ENCODE measurements at regions of chr2 and their contacts with region 1.

Region 1: DNA sequence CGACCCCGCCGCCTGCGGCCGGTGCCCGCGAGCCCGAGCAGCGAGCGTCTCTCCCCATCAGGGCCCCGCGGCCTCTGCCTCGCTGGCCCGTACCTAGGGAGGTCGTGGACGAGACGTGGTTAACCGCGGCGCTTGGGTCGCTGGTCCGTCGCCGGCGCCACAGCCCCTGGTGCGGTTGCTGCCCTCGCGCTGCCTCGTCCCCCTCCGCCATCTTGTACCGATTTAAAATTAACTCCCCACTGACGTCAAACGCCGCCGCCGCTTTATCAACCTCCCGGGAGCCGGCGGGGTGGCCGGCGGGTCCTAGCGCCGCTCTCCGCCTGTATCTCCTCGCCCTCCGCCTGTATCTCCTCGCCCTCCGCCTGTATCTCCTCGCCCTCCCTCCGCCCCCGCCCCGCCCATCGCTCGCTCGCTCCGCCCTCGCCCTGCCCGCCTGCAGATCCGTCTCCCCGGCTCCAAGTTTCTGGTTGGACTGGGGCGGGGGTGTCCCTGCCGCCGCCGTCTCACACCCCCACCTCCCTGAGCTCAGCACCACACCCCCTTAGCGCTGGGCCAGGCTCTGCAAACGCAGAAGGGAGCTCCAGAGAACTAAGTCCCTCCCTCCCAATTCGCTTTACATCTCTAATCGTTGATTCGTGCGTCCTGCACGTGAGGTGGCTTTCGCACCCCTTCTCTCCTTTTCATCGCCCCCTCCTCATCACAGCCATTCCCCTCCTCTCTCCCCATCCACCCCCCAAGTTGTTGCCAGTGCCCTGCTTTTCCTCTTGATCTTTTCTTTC is at the start of gene ATL2:
- DNase-seq: peak; percentile 97
- ATAC-seq: peak; percentile 79
- H3K4me3 Mint-ChIP-seq: peak within 1 kb of the TSS; percentile 90
- H3K27ac Mint-ChIP-seq: peak within 1 kb of the TSS; percentile 90
- H3K4me1 Mint-ChIP-seq: peaks cover 73% of the 10 kb centered on the region
- H3K27me3 Mint-ChIP-seq: no peaks in the 10 kb centered on the region
- total RNA-seq, gene ATL2: 29.9 to 50.3 TPM

Region 2: GRCh38 chr2:36966370-36967235 is 1410.6 kb before region 1 on chr2 and contains the start of gene STRN:
- CTCF ChIA-PET with region 1: no interaction called
- POLR2A ChIA-PET with region 1: no interaction called
- intact Hi-C with region 1: loop called in 1 of 2 experiments (anchors 2 kb)
- DNase-seq: peak; percentile 99
- ATAC-seq: peak; percentile 95
- H3K4me3 Mint-ChIP-seq: peak within 1 kb of the TSS; percentile 100
- H3K27ac Mint-ChIP-seq: peak within 1 kb of the TSS; percentile 97
- H3K4me1 Mint-ChIP-seq: peaks cover 41% of the 10 kb centered on the region
- H3K27me3 Mint-ChIP-seq: no peaks in the 10 kb centered on the region
- total RNA-seq, gene STRN: 27.7 to 32.0 TPM

Region 3: DNA sequence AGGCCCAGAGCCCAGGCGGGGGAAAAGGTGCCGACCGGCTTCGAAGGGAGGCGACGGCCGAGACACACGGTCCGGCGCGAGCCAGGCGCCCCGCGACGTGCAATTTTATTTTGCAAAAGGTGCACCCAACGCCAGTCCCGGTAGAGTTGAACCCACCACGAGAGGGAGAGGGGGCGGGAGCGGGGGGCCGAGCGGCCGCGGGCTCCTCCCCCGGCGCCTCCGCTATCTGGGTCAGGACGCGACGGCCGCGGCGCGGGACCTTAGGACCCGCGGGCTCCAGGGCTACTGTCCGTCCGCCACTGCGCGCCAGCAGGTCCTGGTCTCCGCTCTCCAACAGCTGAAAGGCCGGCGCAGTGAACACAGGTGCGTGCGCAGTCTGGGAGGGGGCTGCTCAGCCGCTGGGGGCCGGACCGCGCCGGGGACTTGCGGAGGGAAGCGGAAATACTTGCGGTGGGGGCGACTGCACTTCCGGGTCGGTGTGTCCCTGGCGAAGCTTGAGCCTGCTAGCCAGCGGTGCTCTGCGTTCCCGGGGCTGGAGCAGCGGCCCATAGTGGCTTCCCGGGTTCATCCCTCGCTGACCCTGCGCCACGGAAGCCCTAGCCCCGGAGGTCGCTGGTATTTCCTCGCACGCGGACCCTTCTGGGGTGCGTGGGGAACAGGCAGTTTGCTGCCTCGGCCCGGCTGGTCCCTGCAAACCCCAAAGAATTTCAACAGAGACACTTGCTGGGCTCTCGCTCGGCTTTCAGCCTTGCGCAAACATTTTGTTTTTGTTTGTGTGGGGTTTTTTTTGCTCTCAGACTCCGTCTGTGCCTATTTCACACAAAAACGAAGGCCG is 452.0 kb before region 1 on chr2 and contains the start of gene RMDN2:
- CTCF ChIA-PET with region 1: no interaction called
- POLR2A ChIA-PET with region 1: no interaction called
- intact Hi-C with region 1: loop called in 1 of 2 experiments (anchors 5 kb)
- DNase-seq: peak; percentile 89
- ATAC-seq: peak; percentile 90
- H3K4me3 Mint-ChIP-seq: peak within 1 kb of the TSS; percentile 97
- H3K27ac Mint-ChIP-seq: peak within 1 kb of the TSS; percentile 96
- H3K4me1 Mint-ChIP-seq: peaks cover 9% of the 10 kb centered on the region
- H3K27me3 Mint-ChIP-seq: peaks cover 3% of the 10 kb centered on the region
- total RNA-seq, gene RMDN2: 2.5 to 2.7 TPM

Region 4: GRCh38 chr2:38323623-38324022 is 53.6 kb before region 1 on chr2:
- CTCF ChIA-PET with region 1: no interaction called
- POLR2A ChIA-PET with region 1: no interaction called
- intact Hi-C with region 1: loop called in 1 of 2 experiments (anchors 2 kb)
- DNase-seq: no peak
- ATAC-seq: no peak
- H3K4me3 Mint-ChIP-seq: no peak overlapping the region
- H3K27ac Mint-ChIP-seq: no peak overlapping the region
- H3K4me1 Mint-ChIP-seq: peaks cover 37% of the 10 kb centered on the region
- H3K27me3 Mint-ChIP-seq: no peaks in the 10 kb centered on the region

Region 5: GRCh38 chr2:38394903-38395341 is 17.7 kb after region 1 on chr2:
- CTCF ChIA-PET with region 1: no interaction called
- POLR2A ChIA-PET with region 1: no interaction called
- intact Hi-C with region 1: no loop called
- DNase-seq: no peak
- ATAC-seq: peak; percentile 64
- H3K4me3 Mint-ChIP-seq: no peak overlapping the region
- H3K27ac Mint-ChIP-seq: no peak overlapping the region
- H3K4me1 Mint-ChIP-seq: peaks cover 9% of the 10 kb centered on the region
- H3K27me3 Mint-ChIP-seq: no peaks in the 10 kb centered on the region

Region 6: DNA sequence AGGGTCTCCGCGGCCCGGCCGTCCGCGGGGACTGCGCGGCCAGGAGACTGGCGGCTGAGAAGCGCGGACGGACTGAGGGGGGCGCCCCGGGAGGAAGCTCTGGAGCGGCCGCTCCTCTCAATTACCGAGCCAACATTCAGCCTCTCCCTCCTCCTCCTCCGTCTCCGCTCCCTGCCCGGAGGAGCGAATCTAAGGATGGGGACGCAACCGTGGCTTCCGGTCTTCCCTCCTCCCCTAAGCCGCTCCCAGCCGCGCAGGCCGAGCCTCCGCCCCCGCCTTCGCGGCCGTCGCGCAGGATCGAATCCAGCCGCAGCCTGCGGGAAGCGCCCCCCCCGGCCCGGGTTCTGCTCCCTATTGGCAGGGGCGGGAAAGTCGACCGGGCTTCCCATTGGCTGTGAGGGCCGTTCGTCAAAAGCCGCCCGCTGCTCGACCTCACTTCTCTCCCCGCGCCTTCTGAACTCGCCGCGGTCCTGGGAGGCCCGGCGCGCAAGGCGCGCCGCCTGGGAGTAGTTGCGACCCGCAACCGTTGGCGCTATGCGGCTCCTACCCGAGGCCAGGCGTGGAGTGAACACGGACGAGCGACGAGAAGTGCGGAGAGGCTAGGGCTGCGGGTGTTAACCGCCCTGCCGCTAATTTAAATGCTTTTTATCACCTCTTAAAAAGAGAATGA is 225.6 kb after region 1 on chr2 and contains the start of gene HNRNPLL:
- CTCF ChIA-PET with region 1: interaction called, 3 read pairs
- POLR2A ChIA-PET with region 1: interaction called, 3 read pairs
- intact Hi-C with region 1: loop called (anchors 1 to 5 kb)
- DNase-seq: peak; percentile 99
- ATAC-seq: peak; percentile 87
- H3K4me3 Mint-ChIP-seq: peak within 1 kb of the TSS; percentile 76
- H3K27ac Mint-ChIP-seq: peak within 1 kb of the TSS; percentile 94
- H3K4me1 Mint-ChIP-seq: peaks cover 48% of the 10 kb centered on the region
- H3K27me3 Mint-ChIP-seq: no peaks in the 10 kb centered on the region
- total RNA-seq, gene HNRNPLL: 53.5 to 59.8 TPM

Region 7: GRCh38 chr2:38778687-38779082 is 401.4 kb after region 1 on chr2:
- CTCF ChIA-PET with region 1: no interaction called
- POLR2A ChIA-PET with region 1: no interaction called
- intact Hi-C with region 1: loop called in 1 of 2 experiments (anchors 1 kb)
- DNase-seq: no peak
- ATAC-seq: no peak
- H3K4me3 Mint-ChIP-seq: peak overlapping the region; percentile 97
- H3K27ac Mint-ChIP-seq: peak overlapping the region; percentile 95
- H3K4me1 Mint-ChIP-seq: peaks cover 7% of the 10 kb centered on the region
- H3K27me3 Mint-ChIP-seq: peaks cover 13% of the 10 kb centered on the region

Region 8: DNA sequence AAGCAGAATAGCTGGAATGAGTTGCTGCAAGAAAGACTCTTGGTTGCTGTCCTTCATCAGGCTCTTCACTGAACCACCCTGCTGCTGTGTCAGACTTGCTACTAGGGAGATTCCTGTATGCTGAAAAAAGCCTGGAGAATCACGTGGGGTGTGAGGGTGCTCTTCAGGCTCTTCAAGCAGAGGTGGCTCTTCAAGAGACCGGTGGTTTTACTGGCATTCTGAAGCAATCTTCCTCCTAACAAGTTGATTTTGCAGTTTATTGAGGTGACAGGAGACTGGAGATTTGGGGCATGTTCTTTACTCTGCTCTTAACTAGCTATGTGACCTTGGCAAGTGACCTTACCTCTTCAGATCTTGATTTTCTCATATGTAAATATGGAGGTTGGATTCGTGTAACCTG is 1302.6 kb after region 1 on chr2:
- CTCF ChIA-PET with region 1: no interaction called
- POLR2A ChIA-PET with region 1: no interaction called
- intact Hi-C with region 1: no loop called
- DNase-seq: no peak
- ATAC-seq: no peak
- H3K4me3 Mint-ChIP-seq: no peak overlapping the region
- H3K27ac Mint-ChIP-seq: no peak overlapping the region
- H3K4me1 Mint-ChIP-seq: no peaks in the 10 kb centered on the region
- H3K27me3 Mint-ChIP-seq: peaks cover 21% of the 10 kb centered on the region

Measured in activated CD4-positive, alpha-beta T cell treated with anti-CD3 and anti-CD28 coated beads for 36 hours (primary cell).